Activated CD4-positive, alpha-beta memory T cell treated with anti-CD3 and anti-CD28 coated beads for 36 hours (primary cell): ENCODE measurements at regions of chr15 and their contacts with region 1.

Region 1: GRCh38 chr15:45118131-45118588 is 4.0 kb downstream of the DUOXA2 start:
- DNase-seq: peak; percentile 91
- H3K4me3 Mint-ChIP-seq: no peak overlapping the region
- H3K27ac Mint-ChIP-seq: no peak overlapping the region
- H3K4me1 Mint-ChIP-seq: peaks cover 26% of the 10 kb centered on the region
- H3K27me3 Mint-ChIP-seq: peaks cover 57% of the 10 kb centered on the region

Region 2: GRCh38 chr15:44573386-44573785 is 544.8 kb before region 1 on chr15:
- CTCF ChIA-PET with region 1: no interaction called
- POLR2A ChIA-PET with region 1: no interaction called
- intact Hi-C with region 1: no loop called
- DNase-seq: no peak
- H3K4me3 Mint-ChIP-seq: no peak overlapping the region
- H3K27ac Mint-ChIP-seq: no peak overlapping the region
- H3K4me1 Mint-ChIP-seq: peaks cover 2% of the 10 kb centered on the region
- H3K27me3 Mint-ChIP-seq: no peaks in the 10 kb centered on the region

Region 3: GRCh38 chr15:44882499-44882968 is 235.6 kb before region 1 on chr15:
- CTCF ChIA-PET with region 1: no interaction called
- POLR2A ChIA-PET with region 1: no interaction called
- intact Hi-C with region 1: no loop called
- DNase-seq: peak; percentile 82
- H3K4me3 Mint-ChIP-seq: peak overlapping the region; percentile 8
- H3K27ac Mint-ChIP-seq: peak overlapping the region; percentile 59
- H3K4me1 Mint-ChIP-seq: peaks cover 34% of the 10 kb centered on the region
- H3K27me3 Mint-ChIP-seq: peaks cover 11% of the 10 kb centered on the region

Region 4: DNA sequence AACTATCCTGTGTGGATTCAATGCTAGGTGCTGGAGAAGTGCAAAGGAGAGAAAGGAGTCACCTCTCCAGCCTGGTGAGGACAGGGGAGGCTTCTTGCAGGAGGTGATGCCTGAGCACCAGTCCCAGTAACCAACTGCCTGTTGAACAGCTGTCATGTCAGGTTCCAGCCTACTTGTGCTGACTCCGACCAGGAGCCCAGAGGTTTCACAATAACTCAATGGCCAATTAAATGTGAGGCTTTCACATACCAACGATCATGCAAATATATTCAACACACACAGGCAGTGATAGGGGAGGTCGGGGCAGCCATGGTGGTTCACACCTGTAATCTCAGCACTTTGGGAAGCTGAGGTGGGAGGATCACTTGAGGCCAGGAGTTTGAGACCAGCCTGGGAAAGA is 87.4 kb before region 1 on chr15:
- CTCF ChIA-PET with region 1: interaction called, 10 read pairs
- POLR2A ChIA-PET with region 1: no interaction called
- intact Hi-C with region 1: no loop called
- DNase-seq: no peak
- H3K4me3 Mint-ChIP-seq: no peak overlapping the region
- H3K27ac Mint-ChIP-seq: no peak overlapping the region
- H3K4me1 Mint-ChIP-seq: no peaks in the 10 kb centered on the region
- H3K27me3 Mint-ChIP-seq: no peaks in the 10 kb centered on the region

Region 5: GRCh38 chr15:45133561-45133920 is 15.4 kb after region 1 on chr15:
- CTCF ChIA-PET with region 1: interaction called, 65 read pairs
- POLR2A ChIA-PET with region 1: interaction called, 4 read pairs
- intact Hi-C with region 1: loop called (anchors 2 kb)
- DNase-seq: no peak
- H3K4me3 Mint-ChIP-seq: no peak overlapping the region
- H3K27ac Mint-ChIP-seq: no peak overlapping the region
- H3K4me1 Mint-ChIP-seq: peaks cover 12% of the 10 kb centered on the region
- H3K27me3 Mint-ChIP-seq: peaks cover 39% of the 10 kb centered on the region

Region 6: DNA sequence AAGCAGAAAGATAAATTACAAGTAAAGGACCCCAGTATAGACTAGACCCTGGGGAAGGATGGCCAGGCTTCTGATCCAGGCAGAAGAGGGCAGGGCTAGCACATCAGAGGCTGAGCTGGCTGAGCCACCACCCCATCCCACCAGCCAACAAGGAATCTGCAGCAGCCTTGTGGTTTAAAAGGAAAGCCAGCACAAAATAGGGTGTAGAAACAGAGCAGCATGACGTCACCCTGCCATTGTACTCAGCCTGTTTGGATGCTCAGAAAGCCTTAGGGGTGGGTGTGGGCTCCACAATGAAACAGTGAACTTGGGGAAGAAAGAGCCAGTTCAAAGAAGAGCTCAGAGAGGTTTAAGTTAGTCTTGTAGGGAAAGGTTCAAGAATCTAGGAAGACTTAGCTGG is 39.8 kb after region 1 on chr15:
- CTCF ChIA-PET with region 1: interaction called, 18 read pairs
- POLR2A ChIA-PET with region 1: no interaction called
- intact Hi-C with region 1: no loop called
- DNase-seq: peak; percentile 28
- H3K4me3 Mint-ChIP-seq: no peak overlapping the region
- H3K27ac Mint-ChIP-seq: peak overlapping the region; percentile 55
- H3K4me1 Mint-ChIP-seq: peaks cover 16% of the 10 kb centered on the region
- H3K27me3 Mint-ChIP-seq: no peaks in the 10 kb centered on the region

Region 7: DNA sequence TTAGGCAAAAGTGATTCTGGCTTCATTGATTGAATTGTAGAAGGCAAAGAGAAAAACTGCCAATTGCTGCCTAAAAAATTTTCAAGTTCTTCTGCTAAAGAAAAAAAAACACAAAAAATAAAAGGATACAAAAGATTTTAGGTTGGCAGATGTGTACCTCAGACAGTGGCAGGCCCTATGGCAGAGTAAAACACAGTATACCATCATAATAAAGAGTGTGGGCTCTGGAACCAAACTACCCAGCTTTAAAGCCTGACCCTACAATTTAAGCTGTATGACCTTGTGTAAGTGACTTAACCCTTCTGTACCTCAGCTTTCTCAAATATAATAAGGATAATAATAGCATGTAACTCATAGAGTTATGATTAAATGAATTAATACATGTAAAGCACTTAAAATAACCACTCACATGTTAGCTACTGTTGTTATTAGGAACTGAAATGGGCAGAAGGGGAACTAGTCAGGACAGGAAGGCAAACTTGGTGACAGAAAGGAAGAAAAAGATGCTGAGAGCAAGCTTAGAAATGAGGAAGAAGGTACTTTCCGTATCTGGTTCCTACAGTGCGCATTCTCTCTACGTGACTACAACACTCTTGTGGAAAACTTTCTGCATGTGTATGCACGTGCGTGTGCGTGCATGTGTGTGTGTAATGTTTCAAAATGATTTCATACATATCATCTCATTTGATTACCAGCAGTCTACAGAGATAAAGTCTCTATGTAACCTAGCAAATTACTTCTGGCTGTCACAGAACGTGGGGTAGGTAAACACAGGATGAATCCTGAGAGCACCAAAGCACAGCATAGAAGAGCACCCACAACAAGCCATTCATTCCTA is 273.8 kb after region 1 on chr15:
- CTCF ChIA-PET with region 1: interaction called, 12 read pairs
- POLR2A ChIA-PET with region 1: no interaction called
- intact Hi-C with region 1: no loop called
- DNase-seq: no peak
- H3K4me3 Mint-ChIP-seq: no peak overlapping the region
- H3K27ac Mint-ChIP-seq: no peak overlapping the region
- H3K4me1 Mint-ChIP-seq: no peaks in the 10 kb centered on the region
- H3K27me3 Mint-ChIP-seq: peaks cover 10% of the 10 kb centered on the region